Mammary epithelial cell (primary cell): ENCODE measurements at regions of chr17 and their contacts with region 1.

Region 1: DNA sequence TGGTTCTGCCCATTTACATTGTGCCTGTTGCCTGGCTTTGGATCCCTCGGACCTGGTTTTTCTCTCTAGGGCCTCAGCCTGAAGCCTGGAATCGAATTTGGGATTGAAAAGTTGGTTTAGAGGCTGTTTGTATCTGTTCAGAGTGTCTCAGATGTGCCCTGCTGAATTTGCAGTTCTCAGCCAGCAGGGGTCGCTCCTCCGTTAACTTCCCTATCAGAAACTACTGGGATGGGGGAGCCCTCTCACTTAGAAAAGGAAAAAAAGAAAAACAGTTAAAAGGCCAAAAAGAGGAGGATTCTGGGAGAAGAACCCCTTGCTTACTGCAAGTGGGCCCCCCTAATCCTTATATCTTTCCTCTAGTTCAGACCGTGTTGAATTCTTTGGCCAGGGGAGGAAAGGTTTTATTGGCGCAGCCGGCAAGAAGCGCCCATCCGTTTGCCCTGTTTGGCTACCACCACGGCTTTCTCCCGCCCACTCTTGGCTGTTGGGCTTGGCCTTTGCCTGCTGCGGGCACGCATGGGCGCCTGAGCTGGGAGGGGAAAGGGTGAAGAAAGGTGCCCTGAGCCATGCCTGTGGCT is 8.7 kb downstream of the FZD2 start:
- DNase-seq: no peak
- H3K4me3 ChIP-seq: no peak overlapping the region
- H3K27ac ChIP-seq: no peak overlapping the region
- H3K4me1 ChIP-seq: no peaks in the 10 kb centered on the region
- H3K27me3 ChIP-seq: no peaks in the 10 kb centered on the region
- CTCF ChIP-seq: peak; percentile 27 to 37

Region 2: DNA sequence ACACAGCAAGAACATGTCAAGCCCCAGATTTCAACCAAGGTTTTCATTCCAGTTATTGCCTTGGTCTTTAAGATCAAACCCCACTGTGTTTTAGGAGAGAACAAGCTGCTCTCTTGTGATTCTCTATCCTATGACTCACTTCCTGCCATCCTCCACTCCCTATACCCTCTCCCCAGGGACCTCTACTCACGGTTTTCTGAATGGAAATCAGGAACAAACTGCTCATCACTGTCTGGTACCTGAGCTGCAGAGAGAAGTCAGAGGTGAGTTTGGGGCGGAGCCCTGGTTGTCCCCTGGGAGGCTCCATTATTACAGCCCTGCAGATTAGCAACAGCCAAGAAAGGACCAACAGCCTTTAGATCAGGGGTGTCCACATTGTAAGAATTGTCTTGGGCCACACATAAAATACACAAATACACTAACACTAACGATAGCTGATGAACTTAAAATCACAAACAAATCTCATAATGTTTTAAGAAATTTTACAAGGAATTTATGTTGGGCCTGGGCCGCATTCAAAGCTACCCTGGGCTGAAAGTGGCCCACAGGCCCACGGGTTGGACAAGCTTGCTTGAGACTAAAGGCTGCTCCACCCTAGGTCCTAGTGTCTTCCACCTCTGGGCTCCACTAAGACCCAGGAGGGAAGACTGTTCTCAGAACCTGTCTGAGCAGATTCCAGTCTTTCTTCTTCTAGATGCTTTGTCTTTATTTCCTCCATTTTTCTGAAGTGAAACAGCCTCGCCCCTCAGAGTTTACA is 1029.5 kb before region 1 on chr17:
- CTCF ChIA-PET with region 1: no interaction called
- dilution Hi-C with region 1: no loop called
- in situ Hi-C with region 1: no loop called
- intact Hi-C with region 1: no loop called
- DNase-seq: peak; percentile 14
- H3K4me3 ChIP-seq: no peak overlapping the region
- H3K27ac ChIP-seq: peak overlapping the region; percentile 35
- H3K4me1 ChIP-seq: peaks cover 19% of the 10 kb centered on the region
- H3K27me3 ChIP-seq: no peaks in the 10 kb centered on the region
- CTCF ChIP-seq: no peak

Region 3: DNA sequence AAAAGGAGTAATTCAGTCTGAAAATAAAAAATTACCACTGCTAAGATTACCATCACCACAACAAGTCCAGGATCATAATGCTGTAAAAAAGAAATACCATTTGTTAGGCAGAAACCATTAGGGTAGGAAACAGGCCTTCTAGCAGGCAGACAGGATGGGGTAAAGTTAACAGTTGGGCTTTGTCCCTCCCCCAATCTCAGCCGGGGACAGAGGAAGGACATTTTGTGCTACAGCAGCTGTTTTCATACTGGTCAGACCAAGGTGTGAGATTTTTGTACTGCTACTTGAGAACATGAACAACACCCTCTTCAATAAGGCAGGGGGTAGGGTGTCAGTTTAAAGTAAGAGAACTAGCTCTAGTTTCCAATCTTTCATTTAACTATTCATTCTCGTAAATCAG is 127.3 kb before region 1 on chr17:
- CTCF ChIA-PET with region 1: interaction called, 14 read pairs
- dilution Hi-C with region 1: no loop called
- in situ Hi-C with region 1: no loop called
- intact Hi-C with region 1: no loop called
- DNase-seq: no peak
- H3K4me3 ChIP-seq: no peak overlapping the region
- H3K27ac ChIP-seq: no peak overlapping the region
- H3K4me1 ChIP-seq: no peaks in the 10 kb centered on the region
- H3K27me3 ChIP-seq: no peaks in the 10 kb centered on the region
- CTCF ChIP-seq: no peak

Region 4: GRCh38 chr17:44664867-44665266 is 98.9 kb after region 1 on chr17:
- CTCF ChIA-PET with region 1: no interaction called
- dilution Hi-C with region 1: no loop called
- in situ Hi-C with region 1: no loop called
- intact Hi-C with region 1: no loop called
- DNase-seq: no peak
- H3K4me3 ChIP-seq: no peak overlapping the region
- H3K27ac ChIP-seq: no peak overlapping the region
- H3K4me1 ChIP-seq: no peaks in the 10 kb centered on the region
- H3K27me3 ChIP-seq: no peaks in the 10 kb centered on the region
- CTCF ChIP-seq: no peak